ENCODE measurements at regions of chr17 and their contacts with region 1.

Region 1: DNA sequence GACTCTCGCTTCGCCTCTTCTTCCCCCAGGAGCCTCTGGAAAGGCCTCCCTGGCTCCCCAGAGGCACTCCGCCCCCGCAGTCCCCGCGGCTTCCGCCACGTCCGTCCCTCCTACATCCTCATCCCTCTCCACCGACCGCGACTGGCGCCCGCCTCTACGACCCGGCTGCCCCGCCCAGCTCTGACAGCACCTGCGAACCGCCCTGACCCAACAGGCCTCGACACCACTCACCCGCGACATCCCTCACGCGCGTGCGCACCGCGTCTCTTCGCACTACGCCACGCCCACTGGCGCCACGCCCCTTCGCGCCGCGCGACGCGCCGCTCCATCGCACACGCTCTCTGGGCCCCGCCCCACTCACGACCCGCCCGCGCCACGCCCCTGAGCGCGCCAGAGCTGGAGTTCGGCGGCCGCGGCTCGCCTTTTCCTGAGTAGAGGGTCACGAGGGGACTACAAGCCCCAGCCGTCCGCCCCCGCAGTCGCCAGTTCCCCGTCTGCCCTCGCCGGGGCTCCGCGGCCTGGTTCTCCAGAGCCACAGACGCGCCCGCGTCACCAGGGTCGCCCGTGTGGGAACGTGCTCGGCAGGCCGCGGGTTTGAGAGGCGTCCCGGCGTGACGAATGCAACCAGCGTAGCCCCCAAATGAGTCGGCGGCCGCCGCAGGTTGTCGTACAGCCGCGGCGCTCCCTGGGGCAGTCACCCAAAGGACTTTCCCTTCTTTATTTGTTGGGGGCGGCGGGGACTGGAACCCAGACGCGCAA is 56.2 kb upstream of the LRRC37A3 start:
- DNase-seq: peak; percentile 97
- ATAC-seq: peak; percentile 93

Region 2: GRCh38 chr17:65055348-65056261 is 80.1 kb after region 1 on chr17:
- intact Hi-C with region 1: loop called in 1 of 2 experiments (anchors 10 kb)
- DNase-seq: peak; percentile 65 to 66
- ATAC-seq: peak; percentile 42